Activated CD4-positive, alpha-beta T cell treated with anti-CD3 and anti-CD28 coated beads, Interleukin-2, amount 10 ng/mL, durations not matched to agents 7 days and 5 days (primary cell): ENCODE measurements at regions of chr4 and their contacts with region 1.

Region 1: DNA sequence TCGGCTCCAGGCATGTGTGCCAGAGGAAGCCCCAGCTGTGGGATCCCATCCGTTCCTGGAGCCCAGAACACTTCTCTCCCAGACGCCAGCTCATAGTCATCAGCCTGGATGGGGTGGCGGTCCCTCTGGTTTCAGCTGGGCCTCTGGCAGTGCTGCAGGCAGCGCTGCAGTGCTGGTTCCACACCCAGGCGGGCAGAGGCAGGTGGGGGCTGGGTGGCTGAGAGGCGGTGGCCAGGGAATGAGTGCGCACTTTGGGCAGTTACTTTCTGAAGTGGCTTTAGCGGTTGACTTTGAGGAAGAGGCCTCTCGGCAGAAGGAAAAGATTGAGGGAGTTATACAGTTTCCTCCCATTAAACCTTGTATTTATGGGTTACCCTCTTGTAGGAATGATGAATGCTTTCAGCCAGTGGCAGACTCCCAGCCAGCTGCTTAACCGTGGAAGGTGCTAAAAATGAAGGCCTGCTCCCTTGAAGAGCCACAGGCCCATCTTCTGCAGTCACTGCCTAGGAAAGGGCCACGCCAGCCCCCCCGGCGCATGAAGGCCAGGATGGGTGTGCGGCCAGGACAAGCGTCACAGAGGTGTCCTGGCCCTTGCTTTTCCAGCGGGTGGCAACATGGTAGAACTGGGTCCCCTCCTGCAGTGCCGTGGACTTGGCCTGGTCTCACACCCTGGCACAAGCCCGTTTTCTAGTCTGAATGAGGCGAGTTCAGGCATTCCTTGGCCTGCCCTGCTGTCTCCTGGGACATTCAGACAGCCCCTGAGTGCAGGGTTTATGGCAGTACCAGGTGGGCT is 9.9 kb downstream of the TADA2B start:
- DNase-seq: peak; percentile 22
- H3K4me3 Mint-ChIP-seq: peak overlapping the region; percentile 5
- H3K27ac Mint-ChIP-seq: peak overlapping the region; percentile 76
- H3K4me1 Mint-ChIP-seq: peaks cover 24% of the 10 kb centered on the region
- H3K27me3 Mint-ChIP-seq: no peaks in the 10 kb centered on the region

Region 2: GRCh38 chr4:6269616-6270511 is 783.3 kb before region 1 on chr4 and contains the start of gene WFS1:
- CTCF ChIA-PET with region 1: no interaction called
- POLR2A ChIA-PET with region 1: no interaction called
- DNase-seq: peak; percentile 96
- H3K4me3 Mint-ChIP-seq: peak within 1 kb of the TSS; percentile 74
- H3K27ac Mint-ChIP-seq: peak within 1 kb of the TSS; percentile 60
- H3K4me1 Mint-ChIP-seq: peaks cover 22% of the 10 kb centered on the region
- H3K27me3 Mint-ChIP-seq: peaks cover 32% of the 10 kb centered on the region
- total RNA-seq, gene WFS1: 1.7 to 2.1 TPM

Region 3: DNA sequence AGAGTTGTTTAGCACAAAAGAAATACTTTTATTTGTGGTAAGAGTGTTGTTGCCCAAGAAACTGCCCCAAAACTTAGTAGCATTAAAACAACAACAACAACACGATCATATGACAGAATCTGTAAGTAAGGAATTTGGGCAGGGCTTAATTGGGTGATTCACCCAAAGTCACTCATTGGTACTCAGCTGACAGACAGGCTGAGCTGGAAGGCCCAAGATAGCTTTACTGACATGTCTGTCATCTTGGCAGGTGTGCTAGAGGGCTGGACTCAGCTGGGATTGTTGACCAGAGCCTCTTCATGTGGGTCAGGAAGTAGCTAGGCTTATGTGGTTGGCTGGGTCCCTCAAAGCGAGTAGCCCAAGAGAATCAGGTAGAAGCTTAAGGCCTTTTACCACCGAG is 218.3 kb before region 1 on chr4:
- CTCF ChIA-PET with region 1: no interaction called
- POLR2A ChIA-PET with region 1: no interaction called
- DNase-seq: no peak
- H3K4me3 Mint-ChIP-seq: no peak overlapping the region
- H3K27ac Mint-ChIP-seq: no peak overlapping the region
- H3K4me1 Mint-ChIP-seq: no peaks in the 10 kb centered on the region
- H3K27me3 Mint-ChIP-seq: no peaks in the 10 kb centered on the region

Region 4: DNA sequence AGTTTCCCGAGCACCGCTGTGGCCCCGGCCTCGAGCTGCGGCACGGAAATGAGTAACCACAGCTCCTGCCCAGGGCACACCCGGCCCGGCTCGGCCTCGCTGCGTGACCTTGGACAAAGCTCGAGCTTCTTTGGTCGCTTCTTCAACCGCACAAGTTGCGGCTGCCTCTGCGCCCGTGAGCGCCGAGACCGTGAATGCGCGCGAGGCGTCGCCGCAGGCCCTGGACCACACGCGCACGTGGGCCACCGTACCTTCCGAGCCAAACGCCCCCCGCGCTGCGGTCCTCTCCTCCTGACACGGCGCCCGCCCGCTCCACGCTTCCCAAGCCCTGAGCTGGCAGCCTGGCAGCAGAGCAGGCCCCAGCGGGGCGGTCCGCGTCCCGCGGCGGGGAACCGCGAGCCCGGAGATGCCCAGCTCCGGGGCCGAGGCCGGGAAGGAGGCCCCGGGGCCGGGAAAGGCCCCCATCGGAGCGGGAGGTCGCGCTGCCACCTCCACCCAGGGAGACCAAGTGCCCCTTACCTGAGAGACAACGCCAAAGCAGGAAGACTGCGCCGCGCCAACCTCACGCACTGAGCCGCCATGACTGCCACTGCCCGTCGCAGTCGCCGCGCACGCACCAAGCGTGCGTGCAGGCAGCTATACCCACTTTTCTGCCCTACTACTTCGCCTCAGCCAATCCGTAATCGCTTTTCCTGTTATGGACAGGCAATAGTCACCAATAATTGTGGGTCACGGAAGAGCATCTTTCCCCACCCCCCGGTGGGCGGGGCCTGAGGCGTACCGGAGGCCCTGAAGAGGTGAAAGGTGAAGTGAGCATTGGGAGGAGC is 14.5 kb after region 1 on chr4 and contains the start of gene GRPEL1:
- CTCF ChIA-PET with region 1: interaction called, 15 read pairs
- POLR2A ChIA-PET with region 1: no interaction called
- DNase-seq: peak; percentile 100
- H3K4me3 Mint-ChIP-seq: peak within 1 kb of the TSS; percentile 92
- H3K27ac Mint-ChIP-seq: peak within 1 kb of the TSS; percentile 94
- H3K4me1 Mint-ChIP-seq: peaks cover 49% of the 10 kb centered on the region
- H3K27me3 Mint-ChIP-seq: peaks cover 9% of the 10 kb centered on the region
- total RNA-seq, gene GRPEL1: 34.8 to 35.4 TPM